Mammary epithelial cell (primary cell): ENCODE measurements at regions of chr15 and their contacts with region 1.

Region 1: DNA sequence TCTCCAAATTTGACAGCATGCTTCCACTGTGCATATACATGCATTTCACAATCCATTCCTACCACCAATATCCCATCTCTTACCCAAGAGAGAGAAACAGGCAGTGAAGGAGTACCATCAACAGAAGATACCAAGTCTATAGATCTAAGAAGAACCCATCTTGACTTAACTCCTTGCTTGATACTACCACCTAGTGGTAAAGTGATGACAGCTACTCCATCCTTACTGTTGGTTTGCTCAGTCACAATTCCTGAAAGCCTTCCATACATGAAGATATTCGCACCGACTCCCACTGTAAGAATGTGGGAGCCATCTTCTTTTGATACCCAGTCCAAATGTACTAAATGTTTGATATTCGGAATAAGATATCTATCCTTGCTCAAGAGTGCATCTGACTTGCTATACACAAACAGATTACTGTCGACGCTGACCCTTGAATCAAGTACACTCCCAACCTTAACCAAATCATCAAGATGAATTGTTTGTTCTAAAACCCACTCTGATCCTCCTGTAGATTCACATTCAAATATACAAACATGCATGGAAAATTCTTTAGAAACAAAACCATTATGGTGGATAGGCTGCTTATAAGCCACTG is 123.1 kb downstream of the DMXL2 start:
- DNase-seq: peak; percentile 48
- H3K4me3 ChIP-seq: no peak overlapping the region
- H3K27ac ChIP-seq: no peak overlapping the region
- H3K4me1 ChIP-seq: no peaks in the 10 kb centered on the region
- H3K27me3 ChIP-seq: no peaks in the 10 kb centered on the region
- CTCF ChIP-seq: peak; percentile 80 to 87

Region 2: GRCh38 chr15:51281368-51281967 is 218.0 kb before region 1 on chr15:
- CTCF ChIA-PET with region 1: no interaction called
- dilution Hi-C with region 1: no loop called
- in situ Hi-C with region 1: no loop called
- intact Hi-C with region 1: loop called (anchors 1 kb)
- DNase-seq: peak; percentile 24
- H3K4me3 ChIP-seq: no peak overlapping the region
- H3K27ac ChIP-seq: no peak overlapping the region
- H3K4me1 ChIP-seq: no peaks in the 10 kb centered on the region
- H3K27me3 ChIP-seq: peaks cover 2% of the 10 kb centered on the region
- CTCF ChIP-seq: peak; percentile 47 to 72

Region 3: GRCh38 chr15:51390966-51391432 is 108.5 kb before region 1 on chr15:
- CTCF ChIA-PET with region 1: no interaction called
- dilution Hi-C with region 1: no loop called
- in situ Hi-C with region 1: loop called in 1 of 2 experiments (anchors 10 kb)
- intact Hi-C with region 1: no loop called
- DNase-seq: no peak
- H3K4me3 ChIP-seq: no peak overlapping the region
- H3K27ac ChIP-seq: no peak overlapping the region
- H3K4me1 ChIP-seq: no peaks in the 10 kb centered on the region
- H3K27me3 ChIP-seq: no peaks in the 10 kb centered on the region
- CTCF ChIP-seq: no peak

Region 4: GRCh38 chr15:51401872-51402517 is 97.5 kb before region 1 on chr15:
- CTCF ChIA-PET with region 1: no interaction called
- dilution Hi-C with region 1: no loop called
- in situ Hi-C with region 1: loop called in 1 of 2 experiments (anchors 10 kb)
- intact Hi-C with region 1: loop called (anchors 1 kb)
- DNase-seq: no peak
- H3K4me3 ChIP-seq: no peak overlapping the region
- H3K27ac ChIP-seq: no peak overlapping the region
- H3K4me1 ChIP-seq: no peaks in the 10 kb centered on the region
- H3K27me3 ChIP-seq: no peaks in the 10 kb centered on the region
- CTCF ChIP-seq: peak; percentile 43 to 60